Left lung (tissue), 14 donors: ENCODE measurements at regions of chr20 and their contacts with region 1.

Region 1: DNA sequence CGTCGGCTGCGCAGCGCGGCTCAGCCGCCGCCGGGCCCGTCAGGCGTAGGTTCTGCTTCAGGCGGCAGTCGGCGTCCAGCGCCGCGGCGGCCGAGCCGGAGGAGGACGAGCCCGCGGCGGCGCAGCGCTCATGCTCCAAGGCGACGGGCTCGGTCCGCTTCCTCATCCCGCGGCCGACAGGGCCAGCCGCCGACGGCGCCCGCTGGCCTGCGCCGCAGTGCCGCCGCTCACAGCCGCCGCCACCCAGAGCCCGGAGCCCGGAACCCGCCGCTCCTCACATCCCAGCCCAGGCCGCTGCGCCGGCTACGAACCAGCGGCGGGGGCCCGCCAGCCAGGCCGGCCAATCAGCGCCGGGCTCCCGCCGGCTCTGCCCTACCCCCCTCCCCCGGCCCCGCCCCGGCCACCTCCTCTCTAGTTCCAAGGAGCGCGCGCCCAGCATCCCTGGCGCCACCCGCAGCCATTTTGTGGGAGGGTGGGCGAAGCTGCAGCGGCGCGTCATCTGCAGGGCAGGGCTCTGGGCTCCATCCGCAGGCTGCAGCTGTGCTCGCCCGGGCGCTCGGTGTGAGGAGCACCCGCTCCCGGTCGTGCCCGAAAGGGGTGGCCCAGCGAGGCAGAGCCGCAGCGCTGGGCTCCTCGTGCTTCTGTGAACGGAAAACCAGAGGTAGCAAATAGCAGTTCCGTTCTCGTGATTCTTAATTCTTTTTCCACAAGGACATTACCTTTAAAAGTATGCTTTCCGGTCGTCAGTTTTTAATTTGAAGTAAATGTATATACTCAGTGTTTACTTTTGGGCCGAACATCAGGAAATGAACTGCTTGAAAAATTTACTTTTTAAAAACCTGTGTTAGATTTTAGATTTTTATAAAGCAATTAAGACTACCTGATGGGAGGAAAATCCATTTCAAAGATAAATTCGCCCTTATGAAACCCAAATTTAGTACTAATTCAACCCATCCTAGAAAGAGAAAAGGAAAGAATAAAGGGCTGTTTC is at the start of gene ABHD12:
- DNase-seq: peak; percentile 91 to 99 (median 97)
- ATAC-seq: peak; percentile 98
- H3K4me3 ChIP-seq: peak within 1 kb of the TSS; percentile 65 to 86
- H3K27ac ChIP-seq: peak within 1 kb of the TSS; percentile 74 to 85
- H3K4me1 ChIP-seq: peaks cover 0 to 20% of the 10 kb centered on the region in 2 donors
- H3K27me3 ChIP-seq: no peaks in the 10 kb centered on the region
- CTCF ChIP-seq: no peak
- polyA plus RNA-seq, gene ABHD12: 39.7 to 48.2 (median 46.3) TPM

Region 2: GRCh38 chr20:25294459-25295385 is 96.1 kb before region 1 on chr20:
- intact Hi-C with region 1: loop called in 1 of 2 experiments (anchors 10 kb)
- DNase-seq: peak in 3 of 4 donors; percentile 26 to 62 (median 37)
- ATAC-seq: peak; percentile 63
- H3K4me3 ChIP-seq: no peak overlapping the region
- H3K27ac ChIP-seq: peak overlapping the region in 1 of 2 donors; percentile 9
- H3K4me1 ChIP-seq: peaks cover 0 to 5% of the 10 kb centered on the region in 2 donors
- H3K27me3 ChIP-seq: no peaks in the 10 kb centered on the region
- CTCF ChIP-seq: peak; percentile 46 to 62